Naive thymus-derived CD4-positive, alpha-beta T cell (primary cell): ENCODE measurements at regions of chr11 and their contacts with region 1.

Region 1: DNA sequence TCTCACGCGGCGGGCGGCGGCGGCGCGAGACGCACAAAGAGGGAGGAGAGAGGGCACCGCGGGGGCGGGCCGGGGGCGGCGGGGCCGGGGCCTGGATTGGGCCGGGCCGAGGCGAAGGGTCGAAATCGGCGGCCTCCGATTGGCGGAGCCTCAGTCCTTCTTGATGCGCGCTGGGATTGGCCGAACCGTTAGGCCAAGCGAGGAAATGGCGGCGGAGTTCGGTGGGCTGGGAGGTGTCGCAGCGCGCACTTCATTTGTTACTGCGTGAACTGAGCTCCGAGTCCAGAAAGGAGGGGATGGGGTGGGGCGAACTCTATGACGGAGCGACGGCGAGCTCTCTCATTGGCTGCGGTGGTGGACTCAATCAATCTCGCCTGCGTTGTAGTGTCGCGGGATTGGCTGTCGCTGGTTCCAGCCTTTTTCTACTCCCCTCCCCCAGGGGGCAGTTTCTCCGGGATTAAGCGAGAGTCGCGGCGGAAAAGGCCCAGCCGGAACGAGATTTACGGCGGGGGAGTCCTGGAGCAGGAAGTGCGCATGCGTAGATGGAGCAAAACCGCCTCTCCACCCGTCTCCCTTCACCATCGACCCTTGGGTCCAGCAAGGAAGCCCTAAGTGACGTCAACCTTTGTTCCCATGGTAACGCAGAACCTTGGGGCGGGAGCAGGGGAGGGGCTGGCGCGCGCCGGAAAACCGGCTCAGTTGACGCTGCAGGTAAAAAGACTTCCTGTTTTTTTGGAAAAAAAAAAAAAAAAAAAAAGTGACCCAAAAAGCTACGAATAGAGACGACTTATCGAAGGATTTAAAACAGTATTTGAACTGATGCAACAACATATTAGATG is at the start of gene SF1:
- DNase-seq: peak; percentile 86 to 100 (median 100)
- ATAC-seq: peak; percentile 89
- H3K4me3 ChIP-seq: peak within 1 kb of the TSS; percentile 94
- H3K4me3 Mint-ChIP-seq: peak within 1 kb of the TSS; percentile 90 to 97 (median 94)
- H3K27ac ChIP-seq: peak within 1 kb of the TSS; percentile 99
- H3K27ac Mint-ChIP-seq: peak within 1 kb of the TSS; percentile 98 to 100 (median 99)
- H3K4me1 ChIP-seq: peaks cover 48 to 52% of the 10 kb centered on the region in 2 donors
- H3K4me1 Mint-ChIP-seq: peaks cover 51 to 71% (median 64%) of the 10 kb centered on the region in 7 donors
- H3K27me3 ChIP-seq: no peaks in the 10 kb centered on the region
- H3K27me3 Mint-ChIP-seq: peaks cover 0 to 5% (median 0%) of the 10 kb centered on the region in 5 donors
- total RNA-seq, gene SF1: 462 to 1,612 (median 904) TPM

Region 2: DNA sequence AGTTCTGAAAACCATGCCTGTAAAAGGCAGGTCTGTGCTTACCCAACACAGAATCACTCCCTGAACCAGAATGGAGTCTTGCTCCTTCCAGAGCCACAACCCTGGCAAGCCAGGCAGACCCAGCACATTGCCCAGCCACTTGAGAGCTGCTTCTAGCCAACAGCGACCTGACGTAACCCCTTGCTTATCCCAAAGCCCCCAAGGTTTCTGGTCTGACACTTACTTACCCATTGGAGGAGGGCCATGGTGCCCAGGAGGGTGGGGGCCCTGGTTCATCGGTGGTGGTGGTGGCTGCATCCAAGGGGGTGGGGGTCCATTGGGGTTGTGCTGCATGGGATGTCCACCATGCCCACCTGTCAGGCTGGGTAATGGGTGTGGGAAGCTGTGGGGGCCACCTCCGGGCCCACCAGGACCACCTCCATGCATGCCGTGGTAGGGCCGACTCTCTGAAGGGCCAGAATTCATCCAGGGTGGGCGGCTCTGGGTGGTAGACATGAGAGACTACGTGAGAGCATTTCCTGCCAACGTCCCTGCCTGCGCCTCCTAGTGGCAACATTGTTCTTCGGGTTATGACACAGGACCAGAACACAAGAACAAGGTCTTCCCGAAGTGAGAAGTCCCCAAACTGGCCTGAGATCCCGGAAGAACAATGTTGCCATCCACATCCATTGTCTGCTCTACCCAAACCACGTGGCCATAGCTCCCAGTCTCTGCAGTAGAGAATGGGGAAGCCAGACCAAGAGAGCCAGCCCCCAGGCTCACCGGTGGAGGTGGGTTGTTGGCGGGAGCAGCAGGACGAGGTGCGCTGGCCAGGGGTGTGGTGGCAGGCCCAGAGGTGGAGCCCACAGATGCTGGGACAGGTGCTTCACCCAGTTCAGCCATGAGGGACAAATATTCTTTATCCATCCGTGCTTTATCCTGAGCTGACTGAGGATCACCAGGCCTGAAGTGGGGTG is 11.1 kb before region 1 on chr11:
- CTCF ChIA-PET with region 1: interaction called, 57 read pairs
- POLR2A ChIA-PET with region 1: interaction called, 1,956 read pairs
- intact Hi-C with region 1: loop called (anchors 1 kb)
- DNase-seq: peak; percentile 65 to 86 (median 78)
- ATAC-seq: peak; percentile 53
- H3K4me3 ChIP-seq: no peak overlapping the region
- H3K4me3 Mint-ChIP-seq: peak overlapping the region; percentile 51 to 96 (median 78)
- H3K27ac ChIP-seq: peak overlapping the region; percentile 69
- H3K27ac Mint-ChIP-seq: peak overlapping the region; percentile 79 to 97 (median 90)
- H3K4me1 ChIP-seq: peaks cover 54 to 84% of the 10 kb centered on the region in 2 donors
- H3K4me1 Mint-ChIP-seq: peaks cover 59 to 97% (median 88%) of the 10 kb centered on the region in 7 donors
- H3K27me3 ChIP-seq: no peaks in the 10 kb centered on the region
- H3K27me3 Mint-ChIP-seq: no peaks in the 10 kb centered on the region

Region 3: DNA sequence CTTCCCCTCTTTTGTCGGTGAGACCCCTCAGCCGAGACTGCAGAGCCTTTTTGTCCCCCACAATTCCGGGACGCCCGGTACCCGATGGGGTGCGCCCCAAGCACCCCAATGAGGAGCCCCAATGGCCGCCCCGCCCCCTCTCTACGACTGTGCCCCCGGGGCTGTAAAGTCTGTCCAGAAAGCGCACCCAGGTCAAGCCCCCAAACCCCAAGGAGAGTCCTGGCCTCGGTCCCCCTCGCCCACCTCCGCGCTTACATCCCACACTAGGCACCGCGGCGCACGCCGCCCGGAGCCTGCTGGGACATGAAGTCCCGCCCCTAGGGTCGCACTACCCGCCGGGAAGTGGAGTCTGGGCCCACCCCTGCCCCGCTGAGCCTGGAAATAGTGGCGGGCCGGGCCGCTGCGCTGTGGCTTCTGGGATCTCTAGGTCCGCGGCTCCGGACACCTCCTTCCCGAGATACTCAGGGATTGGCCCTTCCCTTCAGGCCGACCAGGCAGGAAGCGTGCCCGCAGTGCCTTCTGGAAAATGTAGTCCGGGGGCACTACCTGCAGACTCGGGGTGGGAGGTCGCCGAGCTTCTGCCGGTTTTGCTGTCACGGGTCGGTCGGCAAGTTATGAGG is 31.7 kb after region 1 on chr11 and contains the start of gene MEN1:
- CTCF ChIA-PET with region 1: interaction called, 5 read pairs
- POLR2A ChIA-PET with region 1: interaction called, 125 read pairs
- intact Hi-C with region 1: loop called (anchors 1 to 2 kb)
- DNase-seq: peak; percentile 64 to 85 (median 81)
- ATAC-seq: peak; percentile 91
- H3K4me3 ChIP-seq: peak within 1 kb of the TSS; percentile 99
- H3K4me3 Mint-ChIP-seq: peak within 1 kb of the TSS; percentile 91 to 98 (median 96)
- H3K27ac ChIP-seq: peak within 1 kb of the TSS; percentile 97
- H3K27ac Mint-ChIP-seq: peak within 1 kb of the TSS; percentile 88 to 97 (median 94)
- H3K4me1 ChIP-seq: peaks cover 7 to 11% of the 10 kb centered on the region in 2 donors
- H3K4me1 Mint-ChIP-seq: peaks cover 23 to 34% (median 30%) of the 10 kb centered on the region in 7 donors
- H3K27me3 ChIP-seq: no peaks in the 10 kb centered on the region
- H3K27me3 Mint-ChIP-seq: peaks cover 0 to 6% (median 0%) of the 10 kb centered on the region in 5 donors
- total RNA-seq, gene MEN1: 25.7 to 46.4 (median 38.0) TPM

Region 4: GRCh38 chr11:64878494-64879243 is 99.9 kb after region 1 on chr11 and contains the start of gene EHD1:
- CTCF ChIA-PET with region 1: no interaction called
- POLR2A ChIA-PET with region 1: interaction called, 8 read pairs
- intact Hi-C with region 1: loop called (anchors 1 kb)
- DNase-seq: peak; percentile 98 to 99 (median 99)
- ATAC-seq: peak; percentile 91
- H3K4me3 ChIP-seq: peak within 1 kb of the TSS; percentile 100
- H3K4me3 Mint-ChIP-seq: peak within 1 kb of the TSS; percentile 95 to 99 (median 98)
- H3K27ac ChIP-seq: peak within 1 kb of the TSS; percentile 81
- H3K27ac Mint-ChIP-seq: peak within 1 kb of the TSS; percentile 88 to 98 (median 94)
- H3K4me1 ChIP-seq: peaks cover 39 to 45% of the 10 kb centered on the region in 2 donors
- H3K4me1 Mint-ChIP-seq: peaks cover 49 to 65% (median 60%) of the 10 kb centered on the region in 7 donors
- H3K27me3 ChIP-seq: no peaks in the 10 kb centered on the region
- H3K27me3 Mint-ChIP-seq: no peaks in the 10 kb centered on the region
- total RNA-seq, gene EHD1: 124 to 263 (median 208) TPM

Region 5: DNA sequence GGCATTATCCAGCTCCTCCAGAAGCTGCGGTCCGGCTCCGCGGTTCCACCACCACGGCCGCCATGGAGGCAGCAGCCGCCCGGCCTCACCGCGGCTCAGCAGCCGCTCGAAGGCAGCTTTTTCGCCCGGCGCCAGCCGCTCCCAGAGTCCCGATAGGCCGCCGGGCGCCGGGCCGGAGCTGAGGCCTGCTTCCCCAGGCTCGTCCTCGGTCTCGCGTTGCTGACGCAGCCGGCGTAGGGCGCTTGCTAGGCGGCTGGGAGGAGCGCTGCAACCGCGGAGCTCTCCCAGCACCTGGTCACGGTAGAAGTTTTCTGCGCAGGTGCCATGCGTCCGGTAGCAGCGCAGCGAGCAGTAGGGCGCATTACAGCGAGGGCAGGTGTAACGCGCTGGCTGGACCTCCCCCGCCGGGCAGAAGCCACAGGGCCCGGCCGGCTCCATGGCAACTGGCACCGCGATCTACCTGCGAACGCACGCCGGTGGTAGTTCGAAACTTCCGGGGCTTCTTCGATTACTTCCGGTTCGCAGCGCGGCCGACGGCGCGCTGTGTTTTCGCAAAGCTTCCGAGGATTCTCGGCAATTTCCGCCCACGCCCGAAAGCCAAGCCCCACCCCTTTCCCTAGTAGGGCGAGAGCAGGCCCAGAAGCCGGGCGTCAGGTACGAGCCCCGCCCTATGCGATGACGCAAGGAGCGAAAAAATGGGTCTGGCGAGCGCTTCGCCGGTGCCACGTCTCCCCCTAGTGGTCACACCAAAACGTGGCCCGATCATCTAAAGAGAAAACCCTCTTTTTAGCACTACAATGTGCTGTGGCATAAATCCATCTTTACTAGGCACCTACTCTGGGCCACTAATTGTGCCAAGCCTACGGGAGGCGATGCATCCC is 338.7 kb after region 1 on chr11 and contains the start of gene ZNHIT2:
- CTCF ChIA-PET with region 1: interaction called, 3 read pairs
- POLR2A ChIA-PET with region 1: interaction called, 11 read pairs
- intact Hi-C with region 1: loop called (anchors 1 to 2 kb)
- DNase-seq: peak; percentile 94 to 100 (median 100)
- ATAC-seq: peak; percentile 85
- H3K4me3 ChIP-seq: peak within 1 kb of the TSS; percentile 92
- H3K4me3 Mint-ChIP-seq: peak within 1 kb of the TSS; percentile 91 to 95 (median 92)
- H3K27ac ChIP-seq: peak within 1 kb of the TSS; percentile 99
- H3K27ac Mint-ChIP-seq: peak within 1 kb of the TSS; percentile 86 to 100 (median 96)
- H3K4me1 ChIP-seq: peaks cover 28 to 37% of the 10 kb centered on the region in 2 donors
- H3K4me1 Mint-ChIP-seq: peaks cover 20 to 77% (median 53%) of the 10 kb centered on the region in 7 donors
- H3K27me3 ChIP-seq: no peaks in the 10 kb centered on the region
- H3K27me3 Mint-ChIP-seq: no peaks in the 10 kb centered on the region
- total RNA-seq, gene ZNHIT2: 9.9 to 18.2 (median 11.3) TPM